Activated CD4-positive, alpha-beta memory T cell treated with anti-CD3 and anti-CD28 coated beads for 36 hours (primary cell): ENCODE measurements at regions of chr19 and their contacts with region 1.

Region 1: GRCh38 chr19:12838182-12838885 is at the start of gene MAST1:
- DNase-seq: peak; percentile 68
- H3K4me3 Mint-ChIP-seq: peak within 1 kb of the TSS; percentile 38
- H3K27ac Mint-ChIP-seq: peak within 1 kb of the TSS; percentile 20
- H3K4me1 Mint-ChIP-seq: peaks cover 38% of the 10 kb centered on the region
- H3K27me3 Mint-ChIP-seq: peaks cover 69% of the 10 kb centered on the region
- total RNA-seq, gene MAST1: 1.7 to 2.3 TPM

Region 2: DNA sequence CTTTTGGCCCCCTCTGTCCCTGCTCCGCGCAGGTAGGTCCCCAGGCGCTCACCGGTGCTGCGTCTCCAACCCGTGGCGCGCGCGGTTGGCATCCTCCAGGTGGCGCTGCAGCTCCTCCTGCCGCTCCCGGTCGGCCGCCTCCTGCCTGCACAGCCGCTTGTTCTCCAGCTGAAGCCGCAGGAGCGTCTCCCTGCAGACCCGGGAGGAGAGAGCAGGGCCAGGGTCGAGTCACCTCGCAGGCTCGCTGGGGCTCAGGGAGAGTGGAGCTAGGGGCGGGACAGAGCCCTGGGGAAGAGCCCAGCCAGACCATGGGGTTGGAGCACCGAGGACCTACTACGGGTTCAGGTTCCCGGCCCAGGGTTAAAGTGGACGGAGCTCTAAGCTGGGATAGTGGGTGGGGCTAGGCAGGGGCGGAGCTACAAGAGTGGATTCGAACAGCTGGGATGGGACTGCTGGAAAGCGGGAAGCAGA is 72.2 kb before region 1 on chr19:
- CTCF ChIA-PET with region 1: interaction called, 17 read pairs
- POLR2A ChIA-PET with region 1: no interaction called
- intact Hi-C with region 1: no loop called
- DNase-seq: peak; percentile 91
- H3K4me3 Mint-ChIP-seq: peak overlapping the region; percentile 43
- H3K27ac Mint-ChIP-seq: no peak overlapping the region
- H3K4me1 Mint-ChIP-seq: peaks cover 12% of the 10 kb centered on the region
- H3K27me3 Mint-ChIP-seq: no peaks in the 10 kb centered on the region

Region 3: GRCh38 chr19:12777217-12778016 is 60.9 kb before region 1 on chr19:
- CTCF ChIA-PET with region 1: interaction called, 5 read pairs
- POLR2A ChIA-PET with region 1: no interaction called
- intact Hi-C with region 1: loop called (anchors 5 kb)
- DNase-seq: peak; percentile 87
- H3K4me3 Mint-ChIP-seq: peak overlapping the region; percentile 76
- H3K27ac Mint-ChIP-seq: peak overlapping the region; percentile 87
- H3K4me1 Mint-ChIP-seq: peaks cover 40% of the 10 kb centered on the region
- H3K27me3 Mint-ChIP-seq: no peaks in the 10 kb centered on the region

Region 4: DNA sequence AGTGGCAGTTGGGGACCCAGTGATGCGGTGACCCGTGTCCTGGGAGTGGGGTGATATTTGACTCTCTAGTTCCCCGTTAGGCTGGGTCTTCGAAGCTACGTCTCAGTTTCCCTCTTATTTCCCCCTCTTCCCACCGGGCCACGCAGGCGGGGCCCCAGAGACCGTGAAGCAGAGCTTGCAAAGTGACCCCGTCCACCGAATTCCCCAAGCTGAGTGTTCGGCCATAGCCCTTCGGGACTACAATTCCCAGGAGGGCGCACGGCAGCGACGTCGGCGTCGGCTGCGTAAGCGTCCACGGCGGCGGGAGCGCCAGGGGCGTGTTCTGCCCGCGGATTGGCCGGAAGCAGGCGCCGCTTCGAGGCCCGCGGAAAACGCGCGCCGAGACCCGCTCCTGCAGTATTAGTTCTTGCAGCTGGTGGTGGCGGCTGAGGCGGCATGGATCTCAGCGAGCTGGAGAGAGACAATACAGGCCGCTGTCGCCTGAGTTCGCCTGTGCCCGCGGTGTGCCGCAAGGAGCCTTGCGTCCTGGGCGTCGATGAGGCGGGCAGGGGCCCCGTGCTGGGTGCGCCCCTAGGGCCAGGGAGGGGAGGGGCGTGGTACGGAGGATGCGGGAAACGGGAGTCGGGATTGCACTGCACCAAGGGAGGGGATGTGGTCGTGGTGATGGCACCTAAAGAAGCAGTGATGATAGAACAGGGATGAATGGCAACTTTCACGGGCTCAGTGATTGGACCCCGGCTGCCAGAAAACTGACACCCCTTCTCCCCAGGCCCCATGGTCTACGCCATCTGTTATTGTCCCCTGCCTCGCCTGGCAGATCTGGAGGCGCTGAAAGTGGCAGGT is 31.9 kb before region 1 on chr19 and contains the start of gene RNASEH2A:
- CTCF ChIA-PET with region 1: interaction called, 4 read pairs
- POLR2A ChIA-PET with region 1: no interaction called
- intact Hi-C with region 1: loop called (anchors 5 kb)
- DNase-seq: peak; percentile 93
- H3K4me3 Mint-ChIP-seq: peak within 1 kb of the TSS; percentile 92
- H3K27ac Mint-ChIP-seq: peak within 1 kb of the TSS; percentile 83
- H3K4me1 Mint-ChIP-seq: peaks cover 20% of the 10 kb centered on the region
- H3K27me3 Mint-ChIP-seq: no peaks in the 10 kb centered on the region
- total RNA-seq, gene RNASEH2A: 61.9 to 66.8 TPM

Region 5: DNA sequence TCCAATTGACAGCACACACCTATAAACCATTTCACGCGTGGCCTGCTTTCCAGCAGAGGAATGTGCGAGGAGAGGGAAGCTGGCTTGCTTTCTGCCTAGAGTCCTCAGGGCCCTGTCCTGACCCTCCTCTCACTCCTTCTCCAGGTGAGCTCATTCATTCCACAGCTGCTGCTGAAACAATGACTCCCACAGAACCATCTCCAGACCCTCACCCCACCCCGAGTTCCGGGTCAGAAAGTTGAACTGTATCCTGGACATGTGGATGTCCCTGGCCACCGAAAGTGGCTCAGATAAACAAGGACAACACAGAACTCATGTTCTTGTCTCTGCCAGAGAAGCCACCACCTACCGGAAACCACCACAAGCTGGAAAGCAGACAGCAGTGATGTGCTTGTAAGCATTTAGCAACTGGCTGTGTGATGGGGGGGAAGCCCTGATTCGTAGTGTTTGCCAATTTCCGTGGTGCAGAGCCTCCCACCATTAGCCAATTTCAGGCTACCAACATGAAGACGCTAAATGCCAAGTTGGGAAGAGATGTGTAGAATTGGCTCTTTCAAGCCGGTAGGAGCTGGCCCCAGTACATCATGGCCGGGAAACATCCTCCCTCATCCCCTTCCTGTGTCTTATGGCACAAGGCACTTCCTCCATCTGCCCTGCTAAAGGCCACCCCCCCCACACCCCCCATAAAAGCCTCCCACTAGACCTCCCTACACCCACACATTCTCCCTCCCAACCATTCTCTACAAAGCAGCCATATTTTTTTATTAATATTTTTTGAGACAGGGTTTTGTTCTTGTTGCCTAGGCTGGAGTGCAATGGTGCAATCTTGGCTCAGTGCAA is 75.7 kb after region 1 on chr19:
- CTCF ChIA-PET with region 1: no interaction called
- POLR2A ChIA-PET with region 1: no interaction called
- intact Hi-C with region 1: no loop called
- DNase-seq: peak; percentile 68
- H3K4me3 Mint-ChIP-seq: no peak overlapping the region
- H3K27ac Mint-ChIP-seq: peak overlapping the region; percentile 78
- H3K4me1 Mint-ChIP-seq: peaks cover 15% of the 10 kb centered on the region
- H3K27me3 Mint-ChIP-seq: no peaks in the 10 kb centered on the region